Activated T-helper 2 cell treated with anti-CD3 and anti-CD28 coated beads, Interferon-gamma antibody, Interleukin-2, Interleukin-4, amounts not matched to agents 10 μg/mL and 5 μg/mL and 100 μg/mL, durations not matched to agents 14 hours and 24 hours and 36 hours (primary cell): ENCODE measurements at regions of chr6 and their contacts with region 1.

Region 1: GRCh38 chr6:162273986-162274385 is 453.6 kb downstream of the PRKN start:
- DNase-seq: no peak
- H3K4me3 Mint-ChIP-seq: no peak overlapping the region
- H3K27ac Mint-ChIP-seq: no peak overlapping the region
- H3K4me1 Mint-ChIP-seq: no peaks in the 10 kb centered on the region
- H3K27me3 Mint-ChIP-seq: no peaks in the 10 kb centered on the region

Region 2: GRCh38 chr6:162230147-162230752 is 43.7 kb before region 1 on chr6:
- intact Hi-C with region 1: no loop called
- DNase-seq: no peak
- H3K4me3 Mint-ChIP-seq: no peak overlapping the region
- H3K27ac Mint-ChIP-seq: no peak overlapping the region
- H3K4me1 Mint-ChIP-seq: no peaks in the 10 kb centered on the region
- H3K27me3 Mint-ChIP-seq: no peaks in the 10 kb centered on the region

Region 3: GRCh38 chr6:162306616-162307015 is 32.6 kb after region 1 on chr6:
- intact Hi-C with region 1: loop called (anchors 1 kb)
- DNase-seq: no peak
- H3K4me3 Mint-ChIP-seq: no peak overlapping the region
- H3K27ac Mint-ChIP-seq: no peak overlapping the region
- H3K4me1 Mint-ChIP-seq: no peaks in the 10 kb centered on the region
- H3K27me3 Mint-ChIP-seq: no peaks in the 10 kb centered on the region